Motor neuron (in vitro differentiated cells): ENCODE measurements at regions of chr15 and their contacts with region 1.

Region 1: GRCh38 chr15:96356494-96357455 is 26.3 kb downstream of the NR2F2 start:
- ATAC-seq: peak; percentile 46 to 80 (median 65)
- H3K4me3 ChIP-seq: peak overlapping the region; percentile 50 to 86 (median 57)
- H3K27ac ChIP-seq: no peak overlapping the region
- H3K4me1 ChIP-seq: peaks cover 30 to 47% of the 10 kb centered on the region in 2 donors

Region 2: GRCh38 chr15:96585484-96586386 is 229.0 kb after region 1 on chr15:
- in situ Hi-C with region 1: loop called in 1 of 9 experiments (anchors 25 kb)
- ATAC-seq: peak in 5 of 8 experiments; percentile 52 to 72 (median 63)
- H3K4me3 ChIP-seq: no peak overlapping the region
- H3K27ac ChIP-seq: no peak overlapping the region
- H3K4me1 ChIP-seq: peaks cover 16% of the 10 kb centered on the region in 2 donors

Region 3: DNA sequence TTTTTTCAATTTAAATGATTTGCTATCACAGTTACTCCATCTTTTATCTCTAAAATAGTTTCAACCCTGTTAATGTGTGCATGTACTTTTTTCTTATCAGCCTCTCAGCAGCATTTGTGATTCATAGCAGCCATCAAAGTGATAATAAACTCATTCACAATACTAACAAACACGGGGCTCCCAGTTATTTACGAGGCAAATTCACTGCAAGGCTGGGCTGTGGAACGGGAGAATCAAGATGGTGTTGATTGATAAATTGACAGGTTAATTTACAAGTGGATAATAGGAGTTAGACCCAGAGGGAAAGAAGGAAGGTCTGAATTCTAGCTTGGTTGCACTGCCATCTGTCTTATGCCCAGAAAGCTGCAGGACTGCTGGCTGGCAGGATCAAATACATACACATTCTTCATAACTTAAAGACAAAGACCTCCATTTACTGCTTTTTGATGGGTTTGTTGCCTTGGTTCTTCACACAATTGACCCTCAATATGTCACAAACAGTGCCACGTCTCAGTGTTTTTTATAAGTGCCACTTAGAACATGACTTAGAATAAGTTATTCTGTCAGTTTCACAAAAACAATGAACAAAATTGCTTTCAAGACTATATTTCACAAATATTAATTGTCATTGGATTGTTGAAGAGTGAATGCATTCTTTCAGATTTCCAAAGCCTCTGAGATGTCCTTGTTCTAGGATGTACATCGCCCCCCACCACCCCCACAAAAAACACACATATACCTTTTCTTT is 536.6 kb after region 1 on chr15:
- in situ Hi-C with region 1: loop called in 2 of 9 experiments (anchors 25 kb)
- ATAC-seq: peak in 7 of 8 experiments; percentile 44 to 74 (median 57)
- H3K4me3 ChIP-seq: no peak overlapping the region
- H3K27ac ChIP-seq: no peak overlapping the region
- H3K4me1 ChIP-seq: peaks cover 7 to 12% of the 10 kb centered on the region in 2 donors

Region 4: DNA sequence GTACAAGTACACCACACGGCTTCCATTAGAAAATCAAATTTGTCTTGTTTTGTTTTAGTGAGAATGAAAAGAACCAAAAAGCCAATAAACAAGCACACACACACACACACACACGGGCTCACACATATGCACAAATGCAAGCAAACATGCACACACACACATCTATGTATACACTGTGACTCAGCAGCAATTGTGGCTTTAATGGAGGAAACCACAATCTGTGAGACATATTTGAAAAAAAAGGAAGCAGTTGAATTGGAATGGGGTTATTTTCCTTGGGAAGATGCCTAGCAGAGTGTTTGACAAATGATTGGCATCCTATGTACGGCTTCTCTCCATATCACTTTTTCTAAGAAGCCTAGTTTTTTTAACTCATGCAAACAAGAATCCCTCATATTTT is 1402.6 kb after region 1 on chr15:
- in situ Hi-C with region 1: loop called in 1 of 9 experiments (anchors 25 kb)
- ATAC-seq: no peak
- H3K4me3 ChIP-seq: no peak overlapping the region
- H3K27ac ChIP-seq: no peak overlapping the region
- H3K4me1 ChIP-seq: no peaks in the 10 kb centered on the region